HepG2 (cell line): ENCODE measurements at regions of chr5 and their contacts with region 1.

Region 1: DNA sequence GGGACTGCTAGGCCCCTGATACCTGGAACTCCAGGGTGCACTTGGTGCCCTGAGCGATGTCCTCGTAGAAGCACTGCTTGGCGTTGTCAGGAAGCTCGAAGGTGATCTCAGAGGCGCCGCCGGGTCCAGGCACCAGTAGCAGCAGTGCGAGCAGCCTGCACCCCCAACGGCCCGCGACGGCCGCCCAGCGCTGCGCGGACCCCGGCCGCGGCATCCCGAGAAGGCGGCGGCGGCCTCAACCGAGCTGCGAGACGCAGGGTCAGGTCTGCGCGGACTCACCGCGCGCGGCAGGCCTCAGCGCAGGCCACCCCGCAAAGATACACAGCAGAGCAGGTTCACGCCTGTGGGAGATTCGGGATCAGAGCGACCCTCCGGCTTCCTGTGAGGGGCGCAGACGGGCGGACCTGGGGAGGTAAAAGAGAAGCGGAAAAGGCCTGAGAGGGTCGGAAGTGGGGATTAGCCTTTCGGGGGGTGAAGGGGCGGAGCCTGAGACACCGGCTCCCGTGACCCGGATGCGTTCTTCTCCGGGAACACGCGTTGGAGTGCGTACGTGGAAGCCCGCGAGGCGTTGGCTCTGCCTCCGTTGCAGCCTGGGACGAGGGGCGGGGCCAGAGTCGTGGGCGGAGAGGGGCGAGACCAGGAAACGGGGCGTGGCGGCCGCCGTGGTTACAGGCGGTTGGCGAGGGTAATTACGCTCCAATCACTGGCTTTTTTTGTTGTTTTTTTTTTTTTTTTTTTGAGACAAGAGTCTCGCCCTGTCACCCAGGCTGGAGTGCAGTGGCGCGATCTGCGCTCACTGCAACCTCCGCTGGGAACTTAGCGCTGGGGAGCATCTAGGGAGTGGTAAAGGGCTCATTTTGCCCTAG is at the start of gene TMED7:
- DNase-seq: peak; percentile 95
- ATAC-seq: peak; percentile 94
- H3K4me3 ChIP-seq: peak within 1 kb of the TSS; percentile 77 to 88 (median 78)
- H3K27ac ChIP-seq: peak within 1 kb of the TSS; percentile 89
- H3K4me1 ChIP-seq: peaks cover 36% of the 10 kb centered on the region
- H3K27me3 ChIP-seq: no peaks in the 10 kb centered on the region; a peak in 1 of 5 replicates
- CTCF ChIP-seq: peak; percentile 10; the same call in 1 of the 2 replicates
- EP300 ChIP-seq: 0 out of 4 replicates have a peak, but pooled peaks of 1 of the 2 experiments have one; percentile 7
- POLR2A ChIP-seq: peak; percentile 72 to 94
- RAD21 ChIP-seq: no peak
- total RNA-seq, gene TMED7: 89.1 and 113 TPM in 2 replicates

Region 2: GRCh38 chr5:115831163-115831768 is 205.5 kb after region 1 on chr5:
- CTCF ChIA-PET with region 1: no interaction called
- POLR2A ChIA-PET with region 1: no interaction called
- in situ Hi-C with region 1: no loop called
- intact Hi-C with region 1: loop called (anchors 2 kb)
- DNase-seq: peak; percentile 57
- ATAC-seq: peak; percentile 82
- H3K4me3 ChIP-seq: no peak overlapping the region
- H3K27ac ChIP-seq: no peak overlapping the region
- H3K4me1 ChIP-seq: peaks cover 24% of the 10 kb centered on the region
- H3K27me3 ChIP-seq: no peaks in the 10 kb centered on the region
- CTCF ChIP-seq: peak; percentile 75
- EP300 ChIP-seq: no peak
- POLR2A ChIP-seq: no peak
- RAD21 ChIP-seq: peak; percentile 46; the same call in 1 of the 2 replicates

Region 3: GRCh38 chr5:116084871-116085715 is 459.3 kb after region 1 on chr5 and contains the start of gene COMMD10:
- CTCF ChIA-PET with region 1: no interaction called
- POLR2A ChIA-PET with region 1: no interaction called
- in situ Hi-C with region 1: no loop called
- intact Hi-C with region 1: loop called (anchors 5 kb)
- DNase-seq: peak; percentile 78
- ATAC-seq: peak; percentile 95
- H3K4me3 ChIP-seq: peak within 1 kb of the TSS; percentile 89 to 98 (median 98)
- H3K27ac ChIP-seq: peak within 1 kb of the TSS; percentile 89
- H3K4me1 ChIP-seq: peaks cover 47% of the 10 kb centered on the region
- H3K27me3 ChIP-seq: no peaks in the 10 kb centered on the region; a peak in 1 of 5 replicates
- CTCF ChIP-seq: no peak
- EP300 ChIP-seq: no peak
- POLR2A ChIP-seq: peak; percentile 90 to 93
- RAD21 ChIP-seq: peak; percentile 36; the same call in 1 of the 2 replicates
- total RNA-seq, gene COMMD10: 39.3 and 45.9 TPM in 2 replicates